ENCODE measurements at regions of chr15 and their contacts with region 1.

Region 1: DNA sequence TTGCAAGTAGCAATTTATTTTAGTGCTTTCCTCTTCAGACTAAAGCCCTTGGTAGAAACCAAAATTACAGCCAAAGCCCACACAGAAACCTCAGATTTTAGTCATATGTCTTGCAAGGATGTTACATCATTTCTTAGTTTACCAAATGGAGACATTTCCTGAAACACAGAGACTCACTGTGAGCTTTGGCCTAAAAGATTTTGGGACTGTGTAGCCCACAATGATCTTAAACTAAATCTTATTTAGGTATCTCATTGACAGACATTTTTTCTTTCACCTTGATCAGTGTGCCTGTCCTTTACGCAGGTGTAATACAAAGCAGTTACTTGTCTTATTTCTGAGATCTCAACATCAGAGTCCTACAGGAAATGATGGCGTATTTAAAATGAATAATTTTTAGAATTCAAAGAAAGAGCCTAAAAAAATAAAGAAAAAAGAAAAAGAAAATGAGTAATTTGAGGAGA is 27.8 kb upstream of the AP4E1 start:
- DNase-seq: no peak
- H3K4me3 ChIP-seq: no peak overlapping the region
- H3K4me1 ChIP-seq: peaks cover 5% of the 10 kb centered on the region; the same call in 1 of the 2 replicates
- H3K27me3 ChIP-seq: no peaks in the 10 kb centered on the region

Region 2: GRCh38 chr15:50669611-50670010 is 211.1 kb before region 1 on chr15:
- in situ Hi-C with region 1: loop called (anchors 5 kb)
- DNase-seq: no peak
- H3K4me3 ChIP-seq: no peak overlapping the region
- H3K4me1 ChIP-seq: no peaks in the 10 kb centered on the region
- H3K27me3 ChIP-seq: no peaks in the 10 kb centered on the region

Measured in HAP-1 (cell line).